Naive thymus-derived CD4-positive, alpha-beta T cell (primary cell): ENCODE measurements at regions of chr4 and their contacts with region 1.

Region 1: DNA sequence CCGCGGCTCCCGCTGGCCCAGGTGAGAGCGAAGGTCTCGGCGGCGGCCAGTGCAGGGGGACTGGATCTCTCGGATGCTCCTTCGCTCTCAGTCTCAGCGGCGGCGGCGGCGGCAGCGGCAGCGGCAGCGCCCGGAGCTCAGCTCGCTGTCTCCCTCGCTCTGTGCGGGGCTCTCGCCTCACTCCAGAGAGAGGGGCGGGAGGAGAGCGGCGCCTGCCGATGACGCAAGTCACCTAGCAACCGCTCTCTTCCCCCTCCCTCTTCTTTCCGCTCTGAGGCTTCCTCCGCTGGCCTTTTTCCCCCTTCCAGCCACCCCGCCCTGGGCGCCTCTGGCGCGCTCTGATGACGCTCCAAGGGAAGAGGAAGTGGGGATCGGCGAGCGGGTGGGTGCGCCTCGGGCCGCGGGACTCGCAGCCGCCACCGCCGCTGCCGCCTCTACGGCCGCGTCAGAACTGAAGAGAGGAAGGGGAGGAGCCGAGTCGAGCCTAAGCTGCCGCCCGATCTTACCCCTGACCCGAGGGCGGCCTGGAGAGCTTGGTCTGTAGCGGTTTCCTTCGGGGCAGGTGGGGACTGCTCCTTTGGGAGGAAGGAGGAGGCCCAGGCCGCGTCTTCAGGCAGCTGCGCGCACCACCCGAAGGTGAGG is at the start of gene FBXW7:
- DNase-seq: peak; percentile 98 to 100 (median 100)
- ATAC-seq: peak; percentile 91
- H3K4me3 ChIP-seq: peak within 1 kb of the TSS; percentile 87
- H3K4me3 Mint-ChIP-seq: peak within 1 kb of the TSS; percentile 90 to 99 (median 97)
- H3K27ac ChIP-seq: peak within 1 kb of the TSS; percentile 90
- H3K27ac Mint-ChIP-seq: peak within 1 kb of the TSS; percentile 93 to 99 (median 97)
- H3K4me1 ChIP-seq: peaks cover 29 to 53% of the 10 kb centered on the region in 2 donors
- H3K4me1 Mint-ChIP-seq: peaks cover 43 to 80% (median 65%) of the 10 kb centered on the region in 7 donors
- H3K27me3 ChIP-seq: no peaks in the 10 kb centered on the region
- H3K27me3 Mint-ChIP-seq: no peaks in the 10 kb centered on the region
- total RNA-seq, gene FBXW7: 57.5 to 139 (median 116) TPM

Region 2: DNA sequence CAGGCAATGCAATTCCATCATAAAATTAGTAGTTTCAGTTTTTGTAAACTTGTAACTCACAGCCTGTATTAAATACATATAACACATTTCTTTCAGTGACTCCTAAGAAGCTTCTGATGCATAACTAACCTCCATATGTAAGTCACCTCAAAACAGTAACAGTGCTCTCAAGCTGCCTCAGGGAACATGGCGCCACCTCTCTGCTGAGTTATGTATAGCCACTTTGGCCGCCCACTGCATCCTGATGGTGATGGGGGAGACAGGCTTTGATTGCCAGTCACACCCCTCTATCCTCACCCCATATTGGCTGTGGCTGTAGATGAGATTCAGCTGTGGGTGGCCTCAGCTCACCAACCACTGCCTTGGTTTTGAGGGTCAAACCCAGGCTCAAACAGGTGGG is 1575.2 kb before region 1 on chr4:
- CTCF ChIA-PET with region 1: no interaction called
- POLR2A ChIA-PET with region 1: no interaction called
- intact Hi-C with region 1: no loop called
- DNase-seq: peak in 1 of 9 donors; percentile 43
- ATAC-seq: peak; percentile 68
- H3K4me3 ChIP-seq: no peak overlapping the region
- H3K4me3 Mint-ChIP-seq: no peak overlapping the region
- H3K27ac ChIP-seq: no peak overlapping the region
- H3K27ac Mint-ChIP-seq: no peak overlapping the region
- H3K4me1 ChIP-seq: no peaks in the 10 kb centered on the region
- H3K4me1 Mint-ChIP-seq: peaks cover 0 to 43% (median 33%) of the 10 kb centered on the region in 7 donors
- H3K27me3 ChIP-seq: no peaks in the 10 kb centered on the region
- H3K27me3 Mint-ChIP-seq: no peaks in the 10 kb centered on the region

Region 3: DNA sequence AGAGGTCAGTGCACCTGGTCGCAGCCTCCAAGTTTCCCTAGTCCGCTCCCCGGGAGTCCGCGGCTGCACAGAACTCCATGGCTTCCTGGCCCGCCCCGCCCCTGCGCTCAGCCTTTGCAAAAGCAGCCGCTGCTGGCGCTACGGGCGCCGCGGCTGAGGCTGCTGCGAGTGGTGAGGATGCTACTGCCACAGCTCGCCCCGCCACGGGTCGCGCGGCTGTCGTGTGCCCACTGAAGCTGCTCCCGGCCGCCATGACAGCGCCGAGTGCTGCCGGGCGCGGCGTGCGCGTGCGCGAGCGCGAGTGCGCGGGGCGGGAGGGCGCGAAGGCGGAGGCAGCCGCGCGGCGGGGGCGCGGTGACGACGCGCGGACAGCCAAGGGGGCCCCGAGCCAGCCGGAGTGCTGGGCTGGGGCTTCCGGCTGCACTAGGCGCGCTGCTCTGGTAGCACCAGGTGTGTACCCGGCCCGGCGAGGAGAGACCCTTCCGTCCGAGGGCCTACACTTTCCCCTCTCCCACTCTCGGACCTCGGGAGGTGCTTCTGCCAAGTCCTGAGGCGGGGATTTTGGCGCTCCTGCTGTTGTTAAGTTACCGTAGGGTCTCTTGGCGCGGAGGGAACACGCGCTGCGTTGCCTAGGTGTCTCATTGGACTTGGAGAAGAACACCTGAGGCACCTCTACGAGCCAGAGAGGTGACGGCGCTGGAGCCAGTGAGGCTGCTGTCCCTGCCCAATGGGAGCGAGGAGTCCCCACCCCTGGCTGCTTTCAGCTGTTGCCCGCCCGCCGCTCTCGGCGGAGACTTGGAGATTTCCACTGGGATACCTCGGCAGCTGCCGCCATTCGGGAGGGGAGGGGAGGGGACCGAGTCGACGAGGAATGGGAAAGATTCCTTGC is 1520.3 kb before region 1 on chr4:
- CTCF ChIA-PET with region 1: no interaction called
- POLR2A ChIA-PET with region 1: no interaction called
- intact Hi-C with region 1: loop called in 1 of 2 experiments (anchors 1 kb)
- DNase-seq: peak; percentile 76 to 89 (median 87)
- ATAC-seq: peak; percentile 88
- H3K4me3 ChIP-seq: peak overlapping the region; percentile 99
- H3K4me3 Mint-ChIP-seq: peak overlapping the region; percentile 95 to 100 (median 99)
- H3K27ac ChIP-seq: peak overlapping the region; percentile 97
- H3K27ac Mint-ChIP-seq: peak overlapping the region; percentile 90 to 100 (median 98)
- H3K4me1 ChIP-seq: peaks cover 18 to 32% of the 10 kb centered on the region in 2 donors
- H3K4me1 Mint-ChIP-seq: peaks cover 20 to 34% (median 32%) of the 10 kb centered on the region in 7 donors
- H3K27me3 ChIP-seq: no peaks in the 10 kb centered on the region
- H3K27me3 Mint-ChIP-seq: no peaks in the 10 kb centered on the region

Region 4: DNA sequence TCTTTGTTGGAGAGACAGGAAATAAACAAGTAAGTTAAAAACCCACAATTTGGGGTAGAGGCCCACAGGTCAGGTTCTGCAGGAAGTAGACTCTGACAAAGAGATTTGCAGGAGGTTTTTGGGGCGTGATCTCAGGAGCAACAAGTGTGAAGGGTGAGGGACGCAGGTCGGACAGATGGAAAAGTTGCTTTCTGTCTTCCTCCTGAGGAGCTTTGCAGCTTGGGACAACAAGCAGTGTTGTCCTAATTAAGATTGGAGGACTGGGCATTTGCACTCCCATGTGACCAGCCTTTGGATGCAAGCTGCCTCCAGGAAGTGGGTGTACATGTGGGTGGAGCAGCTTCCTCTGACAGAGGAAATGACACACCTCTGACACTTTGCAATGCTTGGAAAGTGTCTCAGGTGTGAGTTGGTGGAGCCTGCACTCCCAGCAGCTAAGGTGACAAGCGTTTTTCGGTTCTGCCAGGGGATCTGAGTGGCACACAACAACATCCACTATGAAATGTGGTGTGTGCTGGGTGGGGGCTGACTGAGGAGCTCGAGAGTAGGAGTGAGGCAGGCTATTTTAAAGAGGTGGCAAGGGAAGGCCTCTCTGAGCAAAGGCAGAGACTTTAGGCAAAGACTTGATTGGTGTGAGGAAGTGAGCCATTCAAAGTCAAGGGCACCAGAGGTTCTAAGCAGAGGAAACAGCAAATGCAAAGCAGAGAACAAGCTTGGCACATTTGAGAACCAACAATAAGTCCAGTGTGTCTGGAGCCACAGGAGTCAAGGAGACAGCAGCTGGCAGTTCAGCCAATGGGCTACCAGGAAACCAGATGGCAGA is 435.4 kb before region 1 on chr4:
- CTCF ChIA-PET with region 1: no interaction called
- POLR2A ChIA-PET with region 1: no interaction called
- intact Hi-C with region 1: loop called in 1 of 2 experiments (anchors 5 kb)
- DNase-seq: peak; percentile 40 to 96 (median 95)
- ATAC-seq: peak; percentile 90
- H3K4me3 ChIP-seq: peak overlapping the region; percentile 58
- H3K4me3 Mint-ChIP-seq: peak overlapping the region; percentile 72 to 98 (median 87)
- H3K27ac ChIP-seq: peak overlapping the region; percentile 89
- H3K27ac Mint-ChIP-seq: peak overlapping the region; percentile 95 to 99 (median 98)
- H3K4me1 ChIP-seq: peaks cover 93 to 94% of the 10 kb centered on the region in 2 donors
- H3K4me1 Mint-ChIP-seq: peaks cover 62 to 96% (median 92%) of the 10 kb centered on the region in 7 donors
- H3K27me3 ChIP-seq: no peaks in the 10 kb centered on the region
- H3K27me3 Mint-ChIP-seq: no peaks in the 10 kb centered on the region

Region 5: DNA sequence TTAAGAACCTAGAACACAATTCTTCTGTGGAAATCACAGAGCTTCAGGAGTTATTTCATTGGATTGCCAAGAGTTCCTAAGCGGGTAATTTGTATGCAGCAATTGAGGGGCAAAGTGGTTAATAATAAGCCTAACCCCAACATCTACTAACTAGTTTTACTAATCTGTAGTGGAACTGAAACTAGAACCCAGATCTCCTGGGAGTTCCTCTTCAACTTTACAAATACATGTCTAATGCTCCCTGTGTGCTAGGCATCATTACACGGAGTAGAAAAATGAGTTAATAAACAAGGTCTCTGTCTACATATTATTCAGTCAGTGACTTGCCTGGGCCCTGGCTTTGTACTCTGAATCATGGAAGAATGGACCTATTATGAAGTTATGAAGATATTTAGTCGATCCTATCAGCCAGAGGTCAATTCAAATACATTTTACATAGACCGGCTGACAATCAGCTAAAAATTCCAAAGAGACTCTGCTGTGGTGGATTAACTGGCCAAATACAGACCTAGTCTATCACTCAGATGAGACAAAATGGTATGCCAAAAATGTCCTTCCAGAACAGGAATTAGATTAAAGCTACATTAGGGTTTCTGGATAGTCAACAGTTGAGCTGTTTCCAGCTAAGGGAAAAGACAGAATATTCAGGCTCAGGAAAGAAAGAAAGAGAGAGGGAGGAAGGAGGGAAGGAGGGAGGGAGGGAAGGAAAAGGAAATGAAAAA is 326.1 kb before region 1 on chr4:
- CTCF ChIA-PET with region 1: no interaction called
- POLR2A ChIA-PET with region 1: no interaction called
- intact Hi-C with region 1: no loop called
- DNase-seq: no peak
- ATAC-seq: no peak
- H3K4me3 ChIP-seq: no peak overlapping the region
- H3K4me3 Mint-ChIP-seq: no peak overlapping the region
- H3K27ac ChIP-seq: no peak overlapping the region
- H3K27ac Mint-ChIP-seq: no peak overlapping the region
- H3K4me1 ChIP-seq: no peaks in the 10 kb centered on the region
- H3K4me1 Mint-ChIP-seq: peaks cover 0 to 8% (median 0%) of the 10 kb centered on the region in 7 donors
- H3K27me3 ChIP-seq: no peaks in the 10 kb centered on the region
- H3K27me3 Mint-ChIP-seq: peaks cover 0 to 18% (median 0%) of the 10 kb centered on the region in 5 donors

Region 6: DNA sequence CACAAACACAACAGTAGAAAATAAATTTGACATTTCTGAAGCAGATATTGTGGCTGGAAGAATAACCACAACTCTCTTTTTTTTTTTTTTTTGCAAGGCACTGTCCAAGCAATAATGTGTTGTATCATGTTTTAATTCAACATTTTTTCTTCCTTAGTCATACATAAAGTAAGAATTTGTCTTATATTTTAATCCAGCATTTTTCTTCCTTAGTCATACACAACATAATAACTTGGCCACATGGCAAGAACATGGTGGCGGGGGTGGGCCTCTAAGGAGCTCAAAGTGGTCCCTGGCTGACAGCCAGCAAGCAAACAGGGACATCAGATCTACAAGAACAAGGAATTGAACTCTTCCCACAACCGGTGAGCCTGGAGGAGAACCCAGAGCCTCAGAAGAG is 20.3 kb before region 1 on chr4:
- CTCF ChIA-PET with region 1: interaction called, 3 read pairs
- POLR2A ChIA-PET with region 1: interaction called, 3 read pairs
- intact Hi-C with region 1: loop called (anchors 2 kb)
- DNase-seq: no peak
- ATAC-seq: no peak
- H3K4me3 ChIP-seq: no peak overlapping the region
- H3K4me3 Mint-ChIP-seq: no peak overlapping the region
- H3K27ac ChIP-seq: no peak overlapping the region
- H3K27ac Mint-ChIP-seq: peak overlapping the region in 1 of 9 donors; percentile 1
- H3K4me1 ChIP-seq: peaks cover 0 to 7% of the 10 kb centered on the region in 2 donors
- H3K4me1 Mint-ChIP-seq: peaks cover 30 to 71% (median 56%) of the 10 kb centered on the region in 7 donors
- H3K27me3 ChIP-seq: no peaks in the 10 kb centered on the region
- H3K27me3 Mint-ChIP-seq: no peaks in the 10 kb centered on the region

Region 7: DNA sequence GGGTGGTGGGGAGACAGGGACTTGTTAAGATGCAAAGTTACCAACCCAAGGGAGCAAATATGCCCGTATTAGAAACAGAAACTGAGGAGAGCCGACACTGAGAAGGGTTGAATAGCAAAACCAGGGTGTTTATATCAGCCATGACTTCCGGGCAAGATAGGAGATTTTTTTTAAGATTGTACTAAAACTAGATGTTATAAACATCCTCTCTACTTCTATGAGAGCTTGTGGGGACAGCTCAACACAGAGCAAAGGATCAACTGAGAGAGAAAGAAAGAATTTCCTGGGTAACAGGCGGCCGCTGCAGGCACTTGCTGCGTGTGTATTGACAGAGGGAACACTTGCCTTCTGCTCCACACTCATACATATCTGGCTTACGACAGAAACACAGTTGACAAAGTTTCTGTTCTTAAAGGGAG is 49.0 kb after region 1 on chr4:
- CTCF ChIA-PET with region 1: no interaction called
- POLR2A ChIA-PET with region 1: interaction called, 20 read pairs
- intact Hi-C with region 1: loop called in 1 of 2 experiments (anchors 2 kb)
- DNase-seq: peak in 5 of 9 donors; percentile 7 to 23 (median 14)
- ATAC-seq: peak; percentile 54
- H3K4me3 ChIP-seq: peak overlapping the region; percentile 14
- H3K4me3 Mint-ChIP-seq: peak overlapping the region; percentile 42 to 78 (median 68)
- H3K27ac ChIP-seq: peak overlapping the region; percentile 58
- H3K27ac Mint-ChIP-seq: peak overlapping the region; percentile 72 to 95 (median 79)
- H3K4me1 ChIP-seq: peaks cover 7 to 11% of the 10 kb centered on the region in 2 donors
- H3K4me1 Mint-ChIP-seq: peaks cover 3 to 17% (median 9%) of the 10 kb centered on the region in 7 donors
- H3K27me3 ChIP-seq: peaks cover 0 to 2% of the 10 kb centered on the region in 2 donors
- H3K27me3 Mint-ChIP-seq: peaks cover 0 to 17% (median 5%) of the 10 kb centered on the region in 5 donors

Region 8: DNA sequence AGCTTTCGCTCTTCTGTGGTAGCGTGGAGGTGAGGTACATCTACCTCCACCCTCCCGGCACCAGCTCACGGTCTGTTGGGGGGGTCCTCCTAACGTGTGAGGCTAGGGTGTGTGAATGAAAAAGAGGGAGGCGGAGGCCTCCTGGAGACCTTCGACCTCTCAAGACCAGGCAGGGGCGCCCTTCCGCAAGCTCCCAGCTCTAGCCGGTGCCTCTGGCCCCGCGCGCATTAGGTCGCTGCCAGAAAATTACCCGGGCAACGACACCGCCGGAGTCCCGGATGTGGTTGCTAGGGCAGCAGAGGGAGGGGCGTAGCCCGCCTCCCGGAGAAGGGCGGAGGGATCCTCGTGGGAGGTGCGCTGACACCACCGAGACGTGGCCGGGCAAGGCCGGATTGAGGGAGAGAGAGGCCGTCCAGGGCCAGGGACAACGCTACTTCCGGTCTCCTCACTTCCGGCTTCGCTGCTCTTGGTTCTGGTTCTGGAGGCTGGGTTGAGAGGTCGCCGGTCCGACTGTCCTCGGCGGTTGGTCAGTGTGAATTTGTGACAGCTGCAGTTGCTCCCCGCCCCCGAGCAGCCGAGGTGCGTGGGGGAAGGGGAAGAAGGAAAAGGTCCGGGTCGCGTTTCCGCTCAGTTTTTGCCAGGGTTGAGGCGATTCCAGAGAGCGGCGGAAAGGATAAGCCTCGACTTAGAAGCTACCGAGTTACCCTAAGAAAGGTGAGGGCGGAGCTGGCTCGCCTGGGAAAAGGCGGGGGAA is 243.7 kb after region 1 on chr4 and contains the starts of genes ARFIP1 and TIGD4:
- CTCF ChIA-PET with region 1: no interaction called
- POLR2A ChIA-PET with region 1: interaction called, 3 read pairs
- intact Hi-C with region 1: loop called (anchors 1 kb)
- DNase-seq: peak; percentile 86 to 97 (median 93)
- ATAC-seq: peak; percentile 94
- H3K4me3 ChIP-seq: peak within 1 kb of the TSS; percentile 97
- H3K4me3 Mint-ChIP-seq: peak within 1 kb of the TSS; percentile 92 to 100 (median 96)
- H3K27ac ChIP-seq: peak within 1 kb of the TSS; percentile 80
- H3K27ac Mint-ChIP-seq: peak within 1 kb of the TSS; percentile 90 to 99 (median 95)
- H3K4me1 ChIP-seq: peaks cover 13 to 16% of the 10 kb centered on the region in 2 donors
- H3K4me1 Mint-ChIP-seq: peaks cover 33 to 60% (median 44%) of the 10 kb centered on the region in 7 donors
- H3K27me3 ChIP-seq: no peaks in the 10 kb centered on the region
- H3K27me3 Mint-ChIP-seq: peaks cover 0 to 29% (median 6%) of the 10 kb centered on the region in 5 donors
- total RNA-seq, gene ARFIP1: 5.1 to 20.2 (median 15.1) TPM
- total RNA-seq, gene TIGD4: 0.15 to 0.19 TPM in 2 of 5 experiments, not detected in the others